K562 (cell line): ENCODE measurements at regions of chr19 and their contacts with region 1.

Region 1: GRCh38 chr19:46788262-46788967 is at the start of gene SLC1A5:
- DNase-seq: peak; percentile 98 to 99 (median 98)
- ATAC-seq: peak; percentile 77
- H3K4me3 ChIP-seq: peak within 1 kb of the TSS; percentile 91
- H3K27ac ChIP-seq: peak within 1 kb of the TSS; percentile 95
- H3K4me1 ChIP-seq: peaks cover 23 to 43% of the 10 kb centered on the region in 2 experiments
- H3K27me3 ChIP-seq: no peaks in the 10 kb centered on the region
- CTCF ChIP-seq: 0 out of 6 replicates have a peak, but pooled peaks of 1 of the 3 experiments have one; percentile 5
- EP300 ChIP-seq: no peak
- POLR2A ChIP-seq: peak; percentile 100
- RAD21 ChIP-seq: no peak
- polyA plus RNA-seq, gene SLC1A5: 31.2 to 42.0 TPM

Region 2: DNA sequence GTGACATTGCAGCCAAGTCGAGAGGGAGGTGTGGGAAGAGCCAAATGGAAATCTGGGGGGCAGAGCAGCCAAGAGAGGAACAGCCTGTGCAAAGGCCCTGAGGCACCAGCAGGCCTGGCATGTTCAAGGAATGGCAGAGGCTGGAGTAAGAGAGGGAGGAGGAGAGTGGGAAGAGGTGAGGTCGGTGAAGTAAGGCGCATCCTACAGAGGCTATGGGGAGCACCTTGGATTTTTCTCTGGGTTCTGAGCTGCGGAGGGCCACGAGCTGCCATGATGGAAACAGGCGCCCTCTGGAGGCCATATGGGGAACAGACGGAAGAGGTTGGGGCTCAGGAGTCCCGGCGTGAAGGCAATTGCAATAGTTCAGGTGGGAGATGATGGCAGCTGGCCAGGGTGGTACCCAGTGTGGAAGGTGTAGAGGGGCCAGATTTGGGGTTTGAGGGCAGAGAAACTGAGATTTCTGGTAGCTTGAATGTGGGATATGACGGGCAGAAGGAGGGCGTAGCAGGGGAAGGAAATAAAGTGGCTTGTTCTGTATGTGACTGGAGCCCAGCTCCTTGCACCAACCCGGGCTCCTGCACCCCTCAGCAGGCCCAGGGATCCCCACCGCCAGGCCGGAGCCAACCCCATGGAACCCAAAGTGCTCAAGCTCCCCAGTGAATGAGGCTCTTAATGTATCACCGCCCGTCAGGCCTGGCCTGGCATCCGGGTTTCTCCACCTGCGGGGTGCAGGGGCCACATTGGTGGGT is 21.7 kb before region 1 on chr19:
- CTCF ChIA-PET with region 1: no interaction called
- POLR2A ChIA-PET with region 1: interaction called, 50 read pairs
- in situ Hi-C with region 1: no loop called
- intact Hi-C with region 1: no loop called
- DNase-seq: peak; percentile 73 to 81 (median 75)
- ATAC-seq: peak; percentile 95
- H3K4me3 ChIP-seq: no peak overlapping the region
- H3K27ac ChIP-seq: no peak overlapping the region; the same call in 2 of the 3 replicates
- H3K4me1 ChIP-seq: peaks cover 0 to 7% of the 10 kb centered on the region in 2 experiments; a peak in 3 of 5 replicates
- H3K27me3 ChIP-seq: no peaks in the 10 kb centered on the region
- CTCF ChIP-seq: peak; percentile 73 to 93 (median 75)
- EP300 ChIP-seq: no peak
- POLR2A ChIP-seq: no peak
- RAD21 ChIP-seq: peak in 1 of 2 experiments; percentile 45; a peak in 2 of 4 replicates

Region 3: GRCh38 chr19:46776927-46777911 is 11.2 kb before region 1 on chr19:
- CTCF ChIA-PET with region 1: no interaction called
- POLR2A ChIA-PET with region 1: interaction called, 50 read pairs
- in situ Hi-C with region 1: no loop called
- intact Hi-C with region 1: no loop called
- DNase-seq: peak; percentile 68 to 88 (median 84)
- ATAC-seq: peak; percentile 55
- H3K4me3 ChIP-seq: no peak overlapping the region
- H3K27ac ChIP-seq: no peak overlapping the region
- H3K4me1 ChIP-seq: peaks cover 0 to 16% of the 10 kb centered on the region in 2 experiments; a peak in 3 of 5 replicates
- H3K27me3 ChIP-seq: no peaks in the 10 kb centered on the region
- CTCF ChIP-seq: no peak
- EP300 ChIP-seq: no peak
- POLR2A ChIP-seq: peak; percentile 58
- RAD21 ChIP-seq: no peak

Region 4: DNA sequence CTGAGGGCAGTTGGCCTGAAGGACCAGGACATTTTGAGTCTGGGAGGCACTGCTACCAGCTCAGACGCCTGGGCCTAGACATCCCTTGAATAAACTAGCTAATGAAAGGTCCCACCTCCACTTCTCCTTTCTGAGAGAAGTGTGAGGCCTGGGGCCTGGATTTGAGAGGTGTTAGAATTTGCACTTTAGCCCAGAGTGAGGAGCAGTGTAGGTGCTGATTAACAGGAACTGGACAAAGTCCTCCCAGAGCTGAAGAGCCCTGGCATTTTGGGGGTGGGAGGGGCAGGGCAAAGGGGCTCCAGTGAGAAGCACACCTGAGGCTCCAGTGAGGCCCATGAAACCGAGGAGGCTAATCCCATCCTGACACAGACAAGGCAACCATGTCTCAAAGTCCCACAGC is 15.1 kb after region 1 on chr19:
- CTCF ChIA-PET with region 1: no interaction called
- POLR2A ChIA-PET with region 1: interaction called, 89 read pairs
- in situ Hi-C with region 1: no loop called
- intact Hi-C with region 1: no loop called
- DNase-seq: no peak
- ATAC-seq: no peak
- H3K4me3 ChIP-seq: no peak overlapping the region
- H3K27ac ChIP-seq: no peak overlapping the region
- H3K4me1 ChIP-seq: peaks cover 0 to 5% of the 10 kb centered on the region in 2 experiments; a peak in 3 of 5 replicates
- H3K27me3 ChIP-seq: no peaks in the 10 kb centered on the region
- CTCF ChIP-seq: no peak
- EP300 ChIP-seq: no peak
- POLR2A ChIP-seq: no peak
- RAD21 ChIP-seq: no peak

Region 5: DNA sequence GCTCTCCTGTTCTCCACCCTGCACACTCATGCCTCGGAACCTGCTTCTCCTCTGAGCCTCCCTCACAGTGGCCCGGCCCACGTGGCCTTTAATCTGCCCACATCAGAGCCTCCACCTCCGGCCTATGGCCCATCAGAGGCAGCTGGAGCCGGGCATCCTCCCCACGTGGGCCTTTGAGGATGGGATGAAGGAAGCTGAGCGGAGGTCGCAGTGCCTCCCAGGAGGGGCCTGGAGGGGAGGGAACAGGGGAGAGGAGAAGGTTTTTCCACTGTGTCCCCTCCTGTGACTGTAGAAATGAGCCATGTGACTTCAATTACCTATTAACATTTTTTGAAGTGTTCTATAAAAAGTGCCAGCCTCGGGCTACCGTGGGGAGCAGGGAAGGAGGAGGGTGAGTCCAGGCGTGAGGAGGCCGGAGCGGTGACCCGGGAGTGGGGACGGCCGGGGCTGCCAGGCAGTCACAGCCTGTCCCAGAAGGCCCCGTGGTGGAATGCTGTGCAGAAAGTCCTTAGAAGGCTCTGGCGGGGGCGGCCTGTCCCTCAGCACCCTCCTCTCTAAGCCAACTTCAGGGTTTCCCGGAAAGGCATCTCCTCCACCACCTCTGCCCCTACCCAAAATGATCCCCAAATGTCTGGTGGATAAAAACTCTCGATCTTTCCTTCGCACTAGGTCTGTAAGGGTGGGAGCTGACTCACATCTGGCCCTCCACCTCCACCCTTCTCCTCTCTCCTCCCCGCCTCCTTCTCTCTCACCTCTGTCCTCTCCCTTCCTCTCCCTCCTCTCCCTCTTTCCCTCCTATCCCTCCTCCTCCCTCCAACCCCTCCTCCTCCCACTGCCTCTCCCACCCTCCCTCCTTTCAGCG is 24.8 kb after region 1 on chr19:
- CTCF ChIA-PET with region 1: no interaction called
- POLR2A ChIA-PET with region 1: interaction called, 31 read pairs
- in situ Hi-C with region 1: no loop called
- intact Hi-C with region 1: no loop called
- DNase-seq: peak; percentile 40 to 54 (median 48)
- ATAC-seq: peak; percentile 75
- H3K4me3 ChIP-seq: no peak overlapping the region
- H3K27ac ChIP-seq: peak overlapping the region; percentile 21; the same call in 1 of the 3 replicates
- H3K4me1 ChIP-seq: peaks cover 11 to 30% of the 10 kb centered on the region in 2 experiments; a peak in 4 of 5 replicates
- H3K27me3 ChIP-seq: no peaks in the 10 kb centered on the region
- CTCF ChIP-seq: no peak
- EP300 ChIP-seq: no peak
- POLR2A ChIP-seq: no peak
- RAD21 ChIP-seq: no peak

Region 6: GRCh38 chr19:46825525-46825971 is 37.1 kb after region 1 on chr19:
- CTCF ChIA-PET with region 1: no interaction called
- POLR2A ChIA-PET with region 1: interaction called, 15 read pairs
- in situ Hi-C with region 1: no loop called
- intact Hi-C with region 1: loop called (anchors 5 kb)
- DNase-seq: no peak
- ATAC-seq: peak; percentile 44
- H3K4me3 ChIP-seq: no peak overlapping the region
- H3K27ac ChIP-seq: no peak overlapping the region
- H3K4me1 ChIP-seq: peaks cover 0 to 18% of the 10 kb centered on the region in 2 experiments; a peak in 4 of 5 replicates
- H3K27me3 ChIP-seq: no peaks in the 10 kb centered on the region
- CTCF ChIP-seq: peak in 1 of 3 experiments; percentile 57; a peak in 2 of 6 replicates
- EP300 ChIP-seq: no peak
- POLR2A ChIP-seq: no peak
- RAD21 ChIP-seq: peak in 1 of 2 experiments; percentile 49; a peak in 2 of 4 replicates

Region 7: GRCh38 chr19:46850228-46851203 is 62.1 kb after region 1 on chr19 and contains the start of gene AP2S1:
- CTCF ChIA-PET with region 1: no interaction called
- POLR2A ChIA-PET with region 1: interaction called, 11 read pairs
- in situ Hi-C with region 1: no loop called
- intact Hi-C with region 1: no loop called
- DNase-seq: peak; percentile 87 to 97 (median 91)
- ATAC-seq: peak; percentile 95
- H3K4me3 ChIP-seq: peak within 1 kb of the TSS; percentile 92
- H3K27ac ChIP-seq: peak within 1 kb of the TSS; percentile 88
- H3K4me1 ChIP-seq: peaks cover 14 to 29% of the 10 kb centered on the region in 2 experiments
- H3K27me3 ChIP-seq: no peaks in the 10 kb centered on the region
- CTCF ChIP-seq: no peak; a peak in 1 of 6 replicates
- EP300 ChIP-seq: no peak
- POLR2A ChIP-seq: peak; percentile 82
- RAD21 ChIP-seq: no peak
- polyA plus RNA-seq, gene AP2S1: 32.4 to 72.0 TPM